Naive thymus-derived CD4-positive, alpha-beta T cell (primary cell): ENCODE measurements at regions of chr6 and their contacts with region 1.

Region 1: GRCh38 chr6:118709859-118710350 is 58.5 kb upstream of the CEP85L start:
- DNase-seq: peak; percentile 25 to 87 (median 83)
- ATAC-seq: peak; percentile 93
- H3K4me3 ChIP-seq: peak overlapping the region; percentile 91
- H3K4me3 Mint-ChIP-seq: peak overlapping the region; percentile 95 to 100 (median 97)
- H3K27ac ChIP-seq: peak overlapping the region; percentile 76
- H3K27ac Mint-ChIP-seq: peak overlapping the region; percentile 94 to 99 (median 97)
- H3K4me1 ChIP-seq: peaks cover 48 to 49% of the 10 kb centered on the region in 2 donors
- H3K4me1 Mint-ChIP-seq: peaks cover 47 to 81% (median 74%) of the 10 kb centered on the region in 7 donors
- H3K27me3 ChIP-seq: no peaks in the 10 kb centered on the region
- H3K27me3 Mint-ChIP-seq: no peaks in the 10 kb centered on the region

Region 2: GRCh38 chr6:118207947-118208346 is 502.0 kb before region 1 on chr6:
- CTCF ChIA-PET with region 1: no interaction called
- POLR2A ChIA-PET with region 1: no interaction called
- intact Hi-C with region 1: no loop called
- DNase-seq: no peak
- ATAC-seq: no peak
- H3K4me3 ChIP-seq: no peak overlapping the region
- H3K4me3 Mint-ChIP-seq: no peak overlapping the region
- H3K27ac ChIP-seq: no peak overlapping the region
- H3K27ac Mint-ChIP-seq: no peak overlapping the region
- H3K4me1 ChIP-seq: no peaks in the 10 kb centered on the region
- H3K4me1 Mint-ChIP-seq: no peaks in the 10 kb centered on the region
- H3K27me3 ChIP-seq: peaks cover 0 to 2% of the 10 kb centered on the region in 2 donors
- H3K27me3 Mint-ChIP-seq: peaks cover 0 to 5% (median 0%) of the 10 kb centered on the region in 5 donors

Region 3: GRCh38 chr6:118473266-118473665 is 236.6 kb before region 1 on chr6:
- CTCF ChIA-PET with region 1: no interaction called
- POLR2A ChIA-PET with region 1: no interaction called
- intact Hi-C with region 1: no loop called
- DNase-seq: no peak
- ATAC-seq: no peak
- H3K4me3 ChIP-seq: no peak overlapping the region
- H3K4me3 Mint-ChIP-seq: no peak overlapping the region
- H3K27ac ChIP-seq: no peak overlapping the region
- H3K27ac Mint-ChIP-seq: peak overlapping the region in 7 of 9 donors; percentile 3 to 14 (median 4)
- H3K4me1 ChIP-seq: no peaks in the 10 kb centered on the region
- H3K4me1 Mint-ChIP-seq: peaks cover 0 to 8% (median 0%) of the 10 kb centered on the region in 7 donors
- H3K27me3 ChIP-seq: no peaks in the 10 kb centered on the region
- H3K27me3 Mint-ChIP-seq: no peaks in the 10 kb centered on the region

Region 4: DNA sequence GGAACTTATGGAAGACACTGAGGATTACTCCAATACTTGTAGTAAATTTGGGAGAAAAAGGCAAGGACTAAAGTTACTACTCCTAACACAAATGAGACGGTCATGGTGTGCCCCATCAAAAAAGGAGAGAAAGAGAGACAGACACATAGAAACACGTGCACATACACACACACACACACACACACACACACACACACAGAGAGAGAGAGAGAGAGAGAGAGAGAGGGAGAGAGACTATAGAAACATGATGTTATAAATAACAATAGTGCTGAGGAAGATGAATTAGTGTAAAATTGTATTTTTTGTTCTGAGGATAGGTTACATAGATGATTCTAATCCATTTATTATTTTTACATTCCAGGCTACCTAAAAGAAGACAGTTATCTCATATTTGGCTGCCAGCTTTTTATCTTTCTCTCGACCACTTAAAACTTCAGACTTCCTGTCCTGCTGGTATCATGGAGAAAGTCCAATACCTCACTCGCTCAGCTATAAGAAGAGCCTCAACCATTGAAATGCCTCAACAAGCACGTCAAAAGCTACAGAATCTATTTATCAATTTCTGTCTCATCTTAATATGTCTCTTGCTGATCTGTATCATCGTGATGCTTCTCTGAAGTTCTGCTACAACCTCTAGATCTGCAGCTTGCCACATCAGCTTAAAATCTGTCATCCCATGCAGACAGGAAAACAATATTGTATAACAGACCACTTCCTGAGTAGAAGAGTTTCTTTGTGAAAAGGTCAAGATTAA is 151.3 kb before region 1 on chr6:
- CTCF ChIA-PET with region 1: no interaction called
- POLR2A ChIA-PET with region 1: interaction called, 24 read pairs
- intact Hi-C with region 1: loop called in 1 of 2 experiments (anchors 2 kb)
- DNase-seq: peak in 7 of 9 donors; percentile 58 to 81 (median 72)
- ATAC-seq: peak; percentile 95
- H3K4me3 ChIP-seq: peak overlapping the region; percentile 15
- H3K4me3 Mint-ChIP-seq: peak overlapping the region; percentile 39 to 90 (median 81)
- H3K27ac ChIP-seq: peak overlapping the region; percentile 74
- H3K27ac Mint-ChIP-seq: peak overlapping the region; percentile 93 to 99 (median 96)
- H3K4me1 ChIP-seq: peaks cover 19 to 25% of the 10 kb centered on the region in 2 donors
- H3K4me1 Mint-ChIP-seq: peaks cover 17 to 71% (median 50%) of the 10 kb centered on the region in 7 donors
- H3K27me3 ChIP-seq: no peaks in the 10 kb centered on the region
- H3K27me3 Mint-ChIP-seq: peaks cover 0 to 2% (median 0%) of the 10 kb centered on the region in 5 donors

Region 5: GRCh38 chr6:118660218-118660569 is 49.7 kb before region 1 on chr6:
- CTCF ChIA-PET with region 1: interaction called, 5 read pairs
- POLR2A ChIA-PET with region 1: interaction called, 20 read pairs
- intact Hi-C with region 1: loop called (anchors 1 kb)
- DNase-seq: peak in 8 of 9 donors; percentile 18 to 83 (median 69)
- ATAC-seq: peak; percentile 76
- H3K4me3 ChIP-seq: no peak overlapping the region
- H3K4me3 Mint-ChIP-seq: peak overlapping the region; percentile 0 to 70 (median 46)
- H3K27ac ChIP-seq: peak overlapping the region; percentile 51
- H3K27ac Mint-ChIP-seq: peak overlapping the region; percentile 48 to 92 (median 83)
- H3K4me1 ChIP-seq: peaks cover 38 to 41% of the 10 kb centered on the region in 2 donors
- H3K4me1 Mint-ChIP-seq: peaks cover 33 to 89% (median 73%) of the 10 kb centered on the region in 7 donors
- H3K27me3 ChIP-seq: no peaks in the 10 kb centered on the region
- H3K27me3 Mint-ChIP-seq: no peaks in the 10 kb centered on the region

Region 6: GRCh38 chr6:118697554-118697953 is 12.4 kb before region 1 on chr6:
- CTCF ChIA-PET with region 1: interaction called, 17 read pairs
- POLR2A ChIA-PET with region 1: interaction called, 20 read pairs
- intact Hi-C with region 1: loop called in 1 of 2 experiments (anchors 1 kb)
- DNase-seq: peak in 1 of 9 donors; percentile 24
- ATAC-seq: peak; percentile 37
- H3K4me3 ChIP-seq: no peak overlapping the region
- H3K4me3 Mint-ChIP-seq: peak overlapping the region in 3 of 10 donors; percentile 12 to 49 (median 15)
- H3K27ac ChIP-seq: no peak overlapping the region
- H3K27ac Mint-ChIP-seq: peak overlapping the region in 6 of 9 donors; percentile 17 to 75 (median 54)
- H3K4me1 ChIP-seq: peaks cover 0 to 6% of the 10 kb centered on the region in 2 donors
- H3K4me1 Mint-ChIP-seq: peaks cover 39 to 98% (median 85%) of the 10 kb centered on the region in 7 donors
- H3K27me3 ChIP-seq: no peaks in the 10 kb centered on the region
- H3K27me3 Mint-ChIP-seq: no peaks in the 10 kb centered on the region

Region 7: GRCh38 chr6:118768904-118769325 is 59.0 kb after region 1 on chr6:
- CTCF ChIA-PET with region 1: interaction called, 3 read pairs
- POLR2A ChIA-PET with region 1: interaction called, 15 read pairs
- intact Hi-C with region 1: loop called in 1 of 2 experiments (anchors 2 kb)
- DNase-seq: peak in 7 of 9 donors; percentile 26 to 56 (median 35)
- ATAC-seq: peak; percentile 65
- H3K4me3 ChIP-seq: peak overlapping the region; percentile 20
- H3K4me3 Mint-ChIP-seq: peak overlapping the region; percentile 30 to 70 (median 48)
- H3K27ac ChIP-seq: peak overlapping the region; percentile 33
- H3K27ac Mint-ChIP-seq: peak overlapping the region; percentile 43 to 88 (median 78)
- H3K4me1 ChIP-seq: peaks cover 10 to 12% of the 10 kb centered on the region in 2 donors
- H3K4me1 Mint-ChIP-seq: peaks cover 15 to 38% (median 26%) of the 10 kb centered on the region in 7 donors
- H3K27me3 ChIP-seq: no peaks in the 10 kb centered on the region
- H3K27me3 Mint-ChIP-seq: no peaks in the 10 kb centered on the region

Region 8: GRCh38 chr6:118934461-118935330 is 224.8 kb after region 1 on chr6 and contains the start of gene MCM9:
- CTCF ChIA-PET with region 1: no interaction called
- POLR2A ChIA-PET with region 1: no interaction called
- intact Hi-C with region 1: loop called (anchors 2 kb)
- DNase-seq: peak; percentile 77 to 93 (median 86)
- ATAC-seq: peak; percentile 92
- H3K4me3 ChIP-seq: peak within 1 kb of the TSS; percentile 98
- H3K4me3 Mint-ChIP-seq: peak within 1 kb of the TSS; percentile 86 to 96 (median 91)
- H3K27ac ChIP-seq: peak within 1 kb of the TSS; percentile 95
- H3K27ac Mint-ChIP-seq: peak within 1 kb of the TSS; percentile 86 to 95 (median 93)
- H3K4me1 ChIP-seq: peaks cover 4 to 8% of the 10 kb centered on the region in 2 donors
- H3K4me1 Mint-ChIP-seq: peaks cover 22 to 47% (median 41%) of the 10 kb centered on the region in 7 donors
- H3K27me3 ChIP-seq: no peaks in the 10 kb centered on the region
- H3K27me3 Mint-ChIP-seq: no peaks in the 10 kb centered on the region
- total RNA-seq, gene MCM9: 21.8 to 33.7 (median 31.1) TPM